ENCODE measurements at regions of chr3 and their contacts with region 1.

Region 1: GRCh38 chr3:141231101-141231935 is at the start of gene PXYLP1:
- DNase-seq: peak; percentile 91
- H3K4me3 Mint-ChIP-seq: peak within 1 kb of the TSS; percentile 85
- H3K27ac Mint-ChIP-seq: peak within 1 kb of the TSS; percentile 97
- H3K4me1 Mint-ChIP-seq: peaks cover 56% of the 10 kb centered on the region
- H3K27me3 Mint-ChIP-seq: peaks cover 2% of the 10 kb centered on the region
- total RNA-seq, gene PXYLP1: 11.9 to 12.1 TPM

Region 2: GRCh38 chr3:140910860-140911259 is 320.5 kb before region 1 on chr3:
- CTCF ChIA-PET with region 1: no interaction called
- POLR2A ChIA-PET with region 1: no interaction called
- DNase-seq: no peak
- H3K4me3 Mint-ChIP-seq: no peak overlapping the region
- H3K27ac Mint-ChIP-seq: no peak overlapping the region
- H3K4me1 Mint-ChIP-seq: no peaks in the 10 kb centered on the region
- H3K27me3 Mint-ChIP-seq: peaks cover 6% of the 10 kb centered on the region

Region 3: GRCh38 chr3:141218162-141218835 is 13.0 kb before region 1 on chr3:
- CTCF ChIA-PET with region 1: interaction called, 11 read pairs
- POLR2A ChIA-PET with region 1: no interaction called
- DNase-seq: no peak
- H3K4me3 Mint-ChIP-seq: no peak overlapping the region
- H3K27ac Mint-ChIP-seq: no peak overlapping the region
- H3K4me1 Mint-ChIP-seq: no peaks in the 10 kb centered on the region
- H3K27me3 Mint-ChIP-seq: peaks cover 8% of the 10 kb centered on the region

Region 4: GRCh38 chr3:141250342-141250741 is 19.0 kb after region 1 on chr3:
- CTCF ChIA-PET with region 1: interaction called, 36 read pairs
- POLR2A ChIA-PET with region 1: interaction called, 4 read pairs
- DNase-seq: no peak
- H3K4me3 Mint-ChIP-seq: no peak overlapping the region
- H3K27ac Mint-ChIP-seq: no peak overlapping the region
- H3K4me1 Mint-ChIP-seq: peaks cover 1% of the 10 kb centered on the region
- H3K27me3 Mint-ChIP-seq: no peaks in the 10 kb centered on the region

Region 5: DNA sequence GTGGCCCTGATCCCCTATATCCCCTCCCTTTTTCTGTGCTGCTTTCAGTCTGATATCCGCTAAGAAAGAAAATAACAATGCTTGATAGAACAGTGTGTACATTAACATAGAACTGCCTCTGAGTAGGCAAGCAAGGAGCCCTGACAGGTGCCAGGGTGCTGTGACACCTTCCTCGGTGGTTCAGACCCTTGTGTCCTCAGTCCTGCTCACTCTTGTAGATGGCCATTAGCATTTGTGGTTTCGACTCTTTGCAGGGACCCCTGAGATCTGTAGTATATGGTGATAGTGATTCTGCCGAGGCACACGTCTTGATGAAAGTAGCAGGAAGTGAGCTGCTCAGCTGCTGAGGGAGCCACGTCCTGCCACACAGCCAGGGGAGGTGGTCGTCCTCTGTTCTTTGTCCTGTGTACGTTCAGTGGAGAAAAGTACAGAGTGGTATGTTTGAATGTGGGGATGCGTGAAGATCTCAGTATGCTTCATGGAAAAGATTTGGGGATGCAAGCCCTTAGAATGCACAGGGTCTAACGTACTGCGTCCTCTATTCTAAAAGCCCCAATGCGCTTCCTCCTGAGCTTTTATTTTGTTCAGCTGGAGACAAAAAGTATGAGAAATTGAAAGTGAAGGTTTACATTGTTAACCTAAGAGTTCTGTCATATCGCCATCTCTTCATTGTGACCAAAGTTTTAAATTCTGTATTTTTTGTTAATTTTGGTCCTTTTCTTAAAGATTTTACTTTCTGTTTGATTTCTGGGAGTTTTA is 35.7 kb after region 1 on chr3:
- CTCF ChIA-PET with region 1: interaction called, 50 read pairs
- POLR2A ChIA-PET with region 1: interaction called, 7 read pairs
- DNase-seq: peak; percentile 58
- H3K4me3 Mint-ChIP-seq: peak overlapping the region; percentile 78
- H3K27ac Mint-ChIP-seq: peak overlapping the region; percentile 98
- H3K4me1 Mint-ChIP-seq: peaks cover 41% of the 10 kb centered on the region
- H3K27me3 Mint-ChIP-seq: no peaks in the 10 kb centered on the region

Region 6: DNA sequence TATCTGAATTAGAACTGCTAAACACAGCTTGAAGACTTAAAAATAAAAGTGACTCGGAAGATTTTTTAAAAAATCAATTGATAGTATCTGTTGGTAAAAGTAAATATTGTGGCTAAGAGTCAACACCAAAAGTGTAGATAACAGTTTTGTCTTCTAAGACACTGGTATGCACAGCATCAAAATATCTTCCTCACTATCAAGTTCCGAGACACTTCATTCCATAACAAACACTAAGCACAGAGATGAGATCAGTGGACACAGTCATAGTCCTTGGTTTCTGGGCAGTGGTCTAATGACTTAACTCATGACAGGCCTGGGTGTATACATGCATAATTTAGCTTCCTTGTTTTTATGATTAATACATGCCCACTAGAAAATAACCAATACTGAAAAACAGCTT is 63.5 kb after region 1 on chr3:
- CTCF ChIA-PET with region 1: interaction called, 10 read pairs
- POLR2A ChIA-PET with region 1: interaction called, 3 read pairs
- DNase-seq: no peak
- H3K4me3 Mint-ChIP-seq: peak overlapping the region; percentile 70
- H3K27ac Mint-ChIP-seq: peak overlapping the region; percentile 88
- H3K4me1 Mint-ChIP-seq: peaks cover 22% of the 10 kb centered on the region
- H3K27me3 Mint-ChIP-seq: peaks cover 2% of the 10 kb centered on the region